Left colon (tissue), 2 donors: ENCODE measurements at regions of chr19 and their contacts with region 1.

Region 1: DNA sequence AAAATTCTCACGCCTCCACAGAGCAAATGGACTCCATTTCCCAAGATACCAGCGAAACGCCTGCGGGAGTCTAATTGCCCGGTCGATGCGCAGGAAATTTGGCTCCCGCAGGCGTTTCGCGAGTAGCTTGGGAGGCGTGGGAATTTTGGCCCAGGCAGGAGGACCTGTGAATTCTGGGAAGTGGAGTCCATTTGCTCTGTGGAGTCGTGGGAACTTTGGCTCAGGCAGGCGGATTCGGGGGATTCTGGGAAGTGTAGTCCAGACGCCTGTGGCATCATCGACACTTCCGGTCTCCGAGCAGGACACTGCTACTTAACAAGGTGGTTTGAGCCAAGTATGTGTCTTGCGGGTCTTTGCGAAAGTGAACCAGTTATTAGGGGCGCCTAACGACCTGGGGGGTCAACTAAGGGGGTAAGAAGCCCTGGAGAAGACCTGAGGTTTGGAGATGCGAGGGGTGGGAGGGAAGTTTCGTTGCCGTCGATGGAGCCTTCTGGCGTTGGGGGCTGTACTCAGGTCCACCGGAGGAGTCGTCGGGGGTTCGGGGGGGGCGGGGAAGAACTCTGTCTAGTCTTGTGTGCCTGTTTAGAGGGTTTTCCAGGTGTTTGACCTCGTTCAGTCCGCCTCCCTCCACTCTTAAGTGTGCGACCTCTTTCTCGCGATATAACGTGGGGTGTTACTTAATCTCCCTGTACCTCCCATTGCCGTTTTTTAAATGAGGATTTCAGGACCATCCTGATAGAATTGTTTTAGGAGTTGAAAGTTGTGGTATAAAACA is at the start of gene ZNF155:
- DNase-seq: peak; percentile 84 to 95
- ATAC-seq: peak; percentile 100
- total RNA-seq, gene ZNF155: 6.9 to 7.1 TPM

Region 2: DNA sequence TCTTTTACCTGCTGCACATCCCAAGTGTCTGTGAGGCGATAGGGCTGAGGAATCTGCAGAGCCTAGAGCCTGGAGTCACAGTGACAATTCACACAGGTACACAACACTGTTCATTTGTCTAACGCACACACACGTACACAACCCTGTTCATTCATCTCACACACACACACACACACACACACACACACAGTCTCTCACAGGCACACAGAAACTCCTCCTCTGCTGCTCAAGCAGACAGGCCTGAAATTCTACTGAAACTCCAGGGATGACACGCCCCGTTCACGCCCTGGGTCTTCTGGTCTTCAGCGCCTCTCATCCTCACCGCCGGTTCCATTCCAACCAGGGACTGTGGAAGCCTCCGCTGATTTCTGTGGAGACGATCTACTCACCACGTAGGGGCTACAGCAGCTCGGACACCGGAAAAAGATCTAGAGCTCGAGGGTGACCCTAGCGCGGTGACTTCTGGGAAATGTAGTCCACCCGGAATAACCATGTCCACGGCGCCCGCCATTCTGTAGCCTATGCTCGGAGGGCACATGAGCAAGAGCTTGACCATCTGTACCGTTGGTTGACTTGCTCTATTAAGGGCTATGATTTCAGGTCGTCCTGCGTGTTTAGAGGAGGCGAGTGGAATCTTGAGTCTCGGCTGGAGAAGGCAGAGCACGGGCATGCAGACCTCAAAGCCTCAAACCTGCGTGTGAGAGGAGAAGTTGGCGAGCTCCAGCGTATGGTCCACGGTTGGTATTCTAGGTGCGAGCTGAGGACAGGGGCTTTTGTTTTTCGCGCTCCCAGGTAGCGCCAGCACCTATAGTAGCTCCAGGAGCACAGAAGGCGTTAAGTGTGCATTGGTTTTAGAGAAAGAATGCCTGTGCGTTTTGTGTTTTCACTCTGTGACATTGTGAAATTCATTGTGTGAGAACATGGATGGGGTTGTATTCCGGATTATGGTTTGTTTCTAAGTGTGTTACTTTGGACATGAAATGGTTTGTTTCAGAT is 82.4 kb before region 1 on chr19:
- intact Hi-C with region 1: no loop called
- DNase-seq: peak; percentile 72 to 83
- ATAC-seq: peak; percentile 100

Region 3: GRCh38 chr19:44051654-44052402 is 67.7 kb after region 1 on chr19 and contains the start of gene ZNF223:
- intact Hi-C with region 1: loop called in 1 of 2 experiments (anchors 2 kb)
- DNase-seq: peak; percentile 93 to 97
- ATAC-seq: peak; percentile 98
- total RNA-seq, gene ZNF223: 5.0 to 8.4 TPM

Region 4: GRCh38 chr19:44141191-44142058 is 157.3 kb after region 1 on chr19 and contains the start of gene ZNF234:
- intact Hi-C with region 1: no loop called
- DNase-seq: peak; percentile 80 to 83
- ATAC-seq: peak; percentile 98
- total RNA-seq, gene ZNF234: 7.6 to 7.7 TPM